Activated CD4-positive, alpha-beta T cell treated with anti-CD3 and anti-CD28 coated beads for 36 hours (primary cell): ENCODE measurements at regions of chr10 and their contacts with region 1.

Region 1: DNA sequence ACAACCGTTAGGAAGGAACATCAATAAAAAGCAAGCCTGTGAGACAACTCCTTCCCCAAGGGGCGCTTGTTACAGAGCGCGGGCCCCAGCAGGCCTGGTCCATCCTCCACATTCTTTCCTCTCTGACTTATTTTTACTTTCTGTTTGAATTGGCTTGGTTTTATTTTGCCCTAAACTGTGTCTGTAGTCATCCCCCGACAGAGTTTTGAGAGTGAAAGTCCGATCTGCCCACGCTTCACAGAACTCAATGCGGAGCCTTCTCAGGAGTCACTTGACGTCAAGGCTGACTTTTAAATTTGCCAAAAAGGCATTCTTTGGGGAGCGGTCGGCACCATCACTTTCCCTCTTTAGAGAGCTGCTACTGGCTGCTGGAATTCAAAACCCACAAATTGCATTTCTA is 150.1 kb upstream of the KLF6 start:
- DNase-seq: peak; percentile 89
- ATAC-seq: peak; percentile 98
- H3K4me3 Mint-ChIP-seq: peak overlapping the region; percentile 37
- H3K27ac Mint-ChIP-seq: peak overlapping the region; percentile 91
- H3K4me1 Mint-ChIP-seq: peaks cover 50% of the 10 kb centered on the region
- H3K27me3 Mint-ChIP-seq: no peaks in the 10 kb centered on the region

Region 2: DNA sequence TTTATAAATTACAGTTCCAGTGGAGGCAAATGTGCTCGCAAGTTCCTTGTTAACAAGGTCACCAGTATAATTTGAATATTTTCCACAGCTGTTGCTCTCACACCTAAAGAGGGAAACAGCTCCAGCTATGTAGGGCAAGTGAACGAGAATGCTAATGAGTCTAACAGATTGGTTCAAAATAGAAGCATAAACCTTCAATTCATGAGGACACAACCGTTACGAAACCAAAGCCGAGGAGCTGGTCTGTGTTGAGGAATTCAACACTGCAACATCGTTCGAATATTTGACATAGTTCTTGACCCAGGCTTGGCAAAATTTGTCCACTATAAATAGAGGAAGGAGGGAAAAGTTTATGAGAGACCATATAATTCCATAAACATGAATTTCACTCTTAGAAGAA is 311.4 kb before region 1 on chr10:
- CTCF ChIA-PET with region 1: no interaction called
- POLR2A ChIA-PET with region 1: no interaction called
- intact Hi-C with region 1: loop called in 1 of 2 experiments (anchors 1 kb)
- DNase-seq: no peak
- ATAC-seq: no peak
- H3K4me3 Mint-ChIP-seq: no peak overlapping the region
- H3K27ac Mint-ChIP-seq: peak overlapping the region; percentile 14
- H3K4me1 Mint-ChIP-seq: peaks cover 30% of the 10 kb centered on the region
- H3K27me3 Mint-ChIP-seq: no peaks in the 10 kb centered on the region

Region 3: DNA sequence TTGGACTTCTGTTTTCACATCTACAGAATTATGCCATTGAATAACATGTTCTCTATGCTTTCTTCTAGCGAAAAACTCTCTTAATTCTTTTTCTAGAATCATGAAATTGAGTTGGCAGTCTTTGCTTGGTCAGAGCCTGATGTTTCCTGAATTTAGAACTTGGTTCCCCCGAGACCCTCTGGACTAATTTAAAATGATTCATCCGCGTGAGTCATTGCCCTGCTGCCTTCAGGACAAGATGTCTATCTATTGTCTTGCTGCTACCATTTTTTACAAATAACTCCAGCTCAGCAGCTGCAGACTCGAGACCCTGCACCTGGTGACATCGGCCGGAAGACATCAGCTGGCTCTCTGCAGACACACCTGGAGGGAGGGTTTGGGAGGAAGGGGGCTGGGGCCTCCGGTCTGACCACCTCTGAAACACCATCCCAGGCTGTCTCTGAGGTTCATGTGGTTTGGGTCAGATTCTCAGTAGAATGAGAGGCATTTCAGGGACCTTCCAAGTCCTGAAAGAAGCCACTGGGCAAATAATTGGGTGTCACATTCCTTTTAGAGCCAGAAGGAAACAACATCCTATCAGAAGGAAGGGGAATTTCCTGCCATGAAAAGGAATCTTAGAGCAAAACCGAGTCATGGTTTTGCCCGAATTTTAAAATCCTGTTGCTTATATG is 129.2 kb before region 1 on chr10:
- CTCF ChIA-PET with region 1: interaction called, 3 read pairs
- POLR2A ChIA-PET with region 1: interaction called, 3 read pairs
- intact Hi-C with region 1: loop called (anchors 1 kb)
- DNase-seq: peak; percentile 59
- ATAC-seq: no peak
- H3K4me3 Mint-ChIP-seq: peak overlapping the region; percentile 46
- H3K27ac Mint-ChIP-seq: no peak overlapping the region
- H3K4me1 Mint-ChIP-seq: peaks cover 63% of the 10 kb centered on the region
- H3K27me3 Mint-ChIP-seq: no peaks in the 10 kb centered on the region

Region 4: GRCh38 chr10:3852147-3852904 is 82.8 kb before region 1 on chr10:
- CTCF ChIA-PET with region 1: interaction called, 3 read pairs
- POLR2A ChIA-PET with region 1: no interaction called
- intact Hi-C with region 1: loop called (anchors 1 kb)
- DNase-seq: peak; percentile 83
- ATAC-seq: peak; percentile 93
- H3K4me3 Mint-ChIP-seq: peak overlapping the region; percentile 34
- H3K27ac Mint-ChIP-seq: peak overlapping the region; percentile 94
- H3K4me1 Mint-ChIP-seq: peaks cover 48% of the 10 kb centered on the region
- H3K27me3 Mint-ChIP-seq: no peaks in the 10 kb centered on the region

Region 5: DNA sequence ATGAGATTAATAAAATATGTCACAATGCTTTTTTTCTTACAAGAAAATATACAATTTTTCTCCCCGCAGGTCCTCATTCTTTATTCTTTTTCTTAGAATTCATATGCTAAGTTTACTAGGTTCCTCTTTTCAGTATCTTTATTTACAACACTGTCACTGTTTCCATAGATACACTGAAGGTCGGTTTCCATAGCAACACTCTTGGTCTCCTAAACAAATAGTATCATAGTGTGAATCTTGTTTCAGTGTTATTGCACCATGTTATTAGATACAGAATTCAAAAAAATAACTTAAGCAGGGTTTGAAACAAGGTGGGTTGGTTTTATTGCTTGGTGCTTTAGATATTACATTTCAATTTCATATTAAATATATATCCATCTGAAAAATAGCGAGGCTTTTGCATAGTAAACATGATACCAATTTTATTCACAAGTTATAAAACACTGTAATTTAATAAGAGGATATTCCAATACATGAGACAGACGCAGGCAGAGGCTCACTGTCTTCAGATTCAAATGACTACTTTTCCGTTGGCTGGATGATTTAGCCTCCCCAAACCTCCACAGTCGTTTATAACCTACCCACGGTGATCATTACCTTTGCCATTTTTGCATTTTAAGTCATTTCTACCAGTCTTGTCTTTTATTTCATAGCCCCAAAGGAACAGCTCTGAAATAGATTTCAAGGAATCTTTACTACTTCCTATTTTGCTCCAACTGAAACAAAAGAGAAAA is 61.2 kb before region 1 on chr10:
- CTCF ChIA-PET with region 1: no interaction called
- POLR2A ChIA-PET with region 1: interaction called, 3 read pairs
- intact Hi-C with region 1: loop called in 1 of 2 experiments (anchors 1 kb)
- DNase-seq: no peak
- ATAC-seq: peak; percentile 27
- H3K4me3 Mint-ChIP-seq: peak overlapping the region; percentile 15
- H3K27ac Mint-ChIP-seq: peak overlapping the region; percentile 89
- H3K4me1 Mint-ChIP-seq: peaks cover 65% of the 10 kb centered on the region
- H3K27me3 Mint-ChIP-seq: no peaks in the 10 kb centered on the region

Region 6: GRCh38 chr10:3972460-3973301 is 37.5 kb after region 1 on chr10:
- CTCF ChIA-PET with region 1: no interaction called
- POLR2A ChIA-PET with region 1: no interaction called
- intact Hi-C with region 1: loop called in 1 of 2 experiments (anchors 2 kb)
- DNase-seq: peak; percentile 63
- ATAC-seq: peak; percentile 88
- H3K4me3 Mint-ChIP-seq: peak overlapping the region; percentile 52
- H3K27ac Mint-ChIP-seq: peak overlapping the region; percentile 93
- H3K4me1 Mint-ChIP-seq: peaks cover 48% of the 10 kb centered on the region
- H3K27me3 Mint-ChIP-seq: no peaks in the 10 kb centered on the region